ENCODE measurements at regions of chr13 and their contacts with region 1.

Region 1: DNA sequence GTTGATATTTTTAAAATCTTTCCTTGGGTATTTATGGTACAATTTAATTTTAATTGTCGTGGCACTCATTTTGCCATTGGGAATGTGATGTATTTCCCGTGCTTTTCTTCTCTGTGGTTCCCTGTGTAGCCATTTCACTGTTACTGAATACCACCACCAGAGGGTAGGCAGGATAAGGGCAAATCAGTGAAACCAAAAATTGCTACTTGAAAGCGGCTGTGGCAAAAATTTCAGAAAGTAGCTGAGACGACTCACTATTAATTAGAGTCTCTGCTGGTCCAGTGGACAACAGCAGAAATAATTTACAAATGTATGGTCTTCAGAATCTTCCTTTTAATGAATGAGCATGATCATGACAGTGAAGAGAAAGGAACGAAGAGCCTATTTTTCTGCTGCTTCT is 34.4 kb upstream of the MIR17HG start:
- DNase-seq: peak; percentile 37
- ATAC-seq: peak; percentile 79
- H3K4me3 Mint-ChIP-seq: peak overlapping the region; percentile 34
- H3K27ac Mint-ChIP-seq: no peak overlapping the region
- H3K4me1 Mint-ChIP-seq: peaks cover 13% of the 10 kb centered on the region
- H3K27me3 Mint-ChIP-seq: peaks cover 9% of the 10 kb centered on the region
- CTCF ChIP-seq: peak; percentile 76

Region 2: GRCh38 chr13:91326146-91326545 is 13.0 kb after region 1 on chr13:
- CTCF ChIA-PET with region 1: interaction called, 16 read pairs
- POLR2A ChIA-PET with region 1: interaction called, 5 read pairs
- intact Hi-C with region 1: no loop called
- DNase-seq: no peak
- ATAC-seq: no peak
- H3K4me3 Mint-ChIP-seq: no peak overlapping the region
- H3K27ac Mint-ChIP-seq: no peak overlapping the region
- H3K4me1 Mint-ChIP-seq: peaks cover 20% of the 10 kb centered on the region
- H3K27me3 Mint-ChIP-seq: peaks cover 5% of the 10 kb centered on the region
- CTCF ChIP-seq: no peak

Region 3: DNA sequence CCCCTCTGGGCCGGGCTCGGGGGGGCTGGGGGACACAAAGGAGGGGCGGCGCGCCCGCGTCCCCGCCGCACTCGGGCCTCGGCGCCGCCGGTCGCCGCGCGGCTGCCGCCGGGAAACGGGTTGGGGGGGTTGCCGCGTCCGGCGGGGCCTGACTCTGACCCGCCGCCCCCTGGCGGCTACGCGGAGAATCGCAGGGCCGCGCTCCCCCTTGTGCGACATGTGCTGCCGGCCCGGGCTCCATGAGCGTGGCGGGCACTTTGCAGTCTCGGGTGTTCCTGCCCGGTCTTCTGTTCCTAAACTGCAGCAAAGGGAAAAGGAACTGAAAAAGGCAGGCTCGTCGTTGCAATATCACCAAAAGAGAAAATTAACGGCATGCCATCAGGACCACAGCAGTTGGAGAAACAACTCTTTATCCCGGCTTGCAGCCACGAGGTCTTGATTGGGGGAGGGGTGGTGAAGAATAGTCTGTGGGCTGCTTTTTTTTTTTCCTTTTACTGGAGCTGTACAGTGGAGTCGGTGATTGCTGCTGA is 35.9 kb after region 1 on chr13:
- CTCF ChIA-PET with region 1: interaction called, 18 read pairs
- POLR2A ChIA-PET with region 1: interaction called, 9 read pairs
- intact Hi-C with region 1: loop called (anchors 2 kb)
- DNase-seq: peak; percentile 95
- ATAC-seq: peak; percentile 59
- H3K4me3 Mint-ChIP-seq: peak overlapping the region; percentile 99
- H3K27ac Mint-ChIP-seq: peak overlapping the region; percentile 97
- H3K4me1 Mint-ChIP-seq: peaks cover 47% of the 10 kb centered on the region
- H3K27me3 Mint-ChIP-seq: no peaks in the 10 kb centered on the region
- CTCF ChIP-seq: peak; percentile 85

Region 4: DNA sequence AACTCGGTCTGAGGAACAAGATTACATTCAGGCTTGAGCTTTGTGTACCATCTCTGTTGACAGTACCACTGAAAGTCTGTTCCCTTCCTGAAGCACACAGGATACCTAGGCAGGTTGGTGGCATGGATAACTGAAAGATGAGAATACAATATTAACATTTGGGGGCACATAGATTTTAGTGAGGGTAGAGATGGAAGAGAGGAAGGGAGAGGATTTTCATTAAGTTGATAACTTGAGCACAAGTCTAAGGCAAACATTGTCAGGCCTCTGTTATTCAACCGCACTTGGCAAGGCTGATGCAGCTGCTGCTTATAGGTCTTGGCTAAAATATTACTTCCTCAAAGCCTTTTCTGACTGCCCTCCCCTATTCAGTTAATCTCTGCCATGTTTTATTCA is 45.3 kb after region 1 on chr13:
- CTCF ChIA-PET with region 1: interaction called, 15 read pairs
- POLR2A ChIA-PET with region 1: interaction called, 10 read pairs
- intact Hi-C with region 1: no loop called
- DNase-seq: no peak
- ATAC-seq: no peak
- H3K4me3 Mint-ChIP-seq: no peak overlapping the region
- H3K27ac Mint-ChIP-seq: peak overlapping the region; percentile 48
- H3K4me1 Mint-ChIP-seq: peaks cover 37% of the 10 kb centered on the region
- H3K27me3 Mint-ChIP-seq: no peaks in the 10 kb centered on the region
- CTCF ChIP-seq: no peak

Region 5: DNA sequence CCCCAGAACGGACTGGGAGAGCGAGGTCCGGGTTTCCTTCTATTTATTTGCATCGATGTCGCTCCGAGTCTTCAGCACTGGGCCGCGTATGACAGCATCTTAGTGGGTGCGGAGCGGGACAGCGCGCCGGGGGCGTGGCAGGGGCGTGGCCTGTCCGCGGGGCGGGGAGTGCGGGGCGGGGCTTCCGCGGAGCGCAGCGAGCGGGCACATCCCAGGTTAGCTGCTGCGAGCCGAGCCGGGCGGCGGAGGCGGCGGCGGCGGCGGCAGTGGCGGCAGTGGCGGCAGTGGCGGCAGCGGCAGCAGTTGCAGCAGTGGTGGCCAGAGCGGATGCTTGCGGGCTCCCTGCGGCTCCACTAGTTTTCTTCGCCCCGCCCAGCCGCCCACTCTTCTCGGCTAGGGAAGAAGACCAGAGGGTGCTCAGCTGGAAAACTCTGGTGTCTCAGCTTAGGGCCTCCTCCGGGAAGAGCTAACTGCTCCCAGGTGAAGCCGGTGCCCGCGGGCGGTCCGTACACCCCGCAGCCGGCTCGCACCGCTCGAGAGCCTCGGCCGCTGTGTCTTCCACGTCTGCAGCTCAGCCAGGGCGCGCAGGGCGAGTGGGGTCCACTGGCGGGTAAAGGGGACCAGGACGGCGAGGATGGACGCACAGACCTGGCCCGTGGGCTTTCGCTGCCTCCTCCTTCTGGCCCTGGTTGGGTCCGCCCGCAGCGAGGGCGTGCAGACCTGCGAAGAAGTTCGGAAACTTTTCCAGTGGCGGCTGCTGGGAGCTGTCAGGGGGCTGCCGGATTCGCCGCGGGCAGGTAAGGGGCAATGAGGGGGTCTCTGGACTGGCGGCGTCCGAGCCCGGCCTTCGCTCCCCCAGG is 85.5 kb after region 1 on chr13 and contains the start of gene GPC5:
- CTCF ChIA-PET with region 1: interaction called, 5 read pairs
- POLR2A ChIA-PET with region 1: no interaction called
- intact Hi-C with region 1: loop called (anchors 5 kb)
- DNase-seq: peak; percentile 81
- ATAC-seq: peak; percentile 99
- H3K4me3 Mint-ChIP-seq: peak within 1 kb of the TSS; percentile 67
- H3K27ac Mint-ChIP-seq: no peak within 1 kb of the TSS
- H3K4me1 Mint-ChIP-seq: peaks cover 15% of the 10 kb centered on the region
- H3K27me3 Mint-ChIP-seq: peaks cover 55% of the 10 kb centered on the region
- CTCF ChIP-seq: no peak
- total RNA-seq, gene GPC5: 0.13 to 0.14 TPM

Region 6: DNA sequence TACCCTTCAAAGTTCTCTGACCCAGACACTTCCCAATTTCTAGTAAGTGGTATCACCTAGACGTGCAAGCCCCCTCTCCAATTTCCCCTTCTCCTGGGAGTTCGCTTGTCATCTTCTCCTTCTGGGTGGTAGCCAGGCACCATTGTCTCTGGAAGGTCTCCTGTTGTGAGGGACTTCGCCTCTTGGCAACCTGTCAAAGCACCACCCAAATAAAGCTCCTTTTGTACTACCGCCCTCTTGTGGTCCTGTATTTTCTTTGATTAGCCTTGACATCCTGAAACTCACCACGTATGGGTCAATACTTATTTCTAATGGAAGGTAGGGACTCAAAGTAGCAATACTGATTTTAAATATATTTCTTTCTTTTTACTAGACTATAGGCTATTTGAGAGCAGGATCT is 93.5 kb after region 1 on chr13:
- CTCF ChIA-PET with region 1: interaction called, 17 read pairs
- POLR2A ChIA-PET with region 1: no interaction called
- intact Hi-C with region 1: no loop called
- DNase-seq: peak; percentile 53
- ATAC-seq: peak; percentile 65
- H3K4me3 Mint-ChIP-seq: no peak overlapping the region
- H3K27ac Mint-ChIP-seq: no peak overlapping the region
- H3K4me1 Mint-ChIP-seq: no peaks in the 10 kb centered on the region
- H3K27me3 Mint-ChIP-seq: peaks cover 18% of the 10 kb centered on the region
- CTCF ChIP-seq: peak; percentile 64